HepG2 (cell line): ENCODE measurements at regions of chr11 and their contacts with region 1.

Region 1: GRCh38 chr11:2196970-2197770 is 25.6 kb upstream of the TH start:
- DNase-seq: peak; percentile 55
- ATAC-seq: peak; percentile 80
- H3K4me3 ChIP-seq: no peak overlapping the region
- H3K27ac ChIP-seq: no peak overlapping the region
- H3K4me1 ChIP-seq: peaks cover 48% of the 10 kb centered on the region
- H3K27me3 ChIP-seq: peaks cover 7 to 16% of the 10 kb centered on the region in 2 experiments; a peak in 4 of 5 replicates
- CTCF ChIP-seq: peak; percentile 100
- EP300 ChIP-seq: no peak
- POLR2A ChIP-seq: no peak
- RAD21 ChIP-seq: peak; percentile 96

Region 2: GRCh38 chr11:2208691-2209369 is 11.7 kb after region 1 on chr11:
- CTCF ChIA-PET with region 1: no interaction called
- POLR2A ChIA-PET with region 1: interaction called, 34 read pairs
- in situ Hi-C with region 1: no loop called
- intact Hi-C with region 1: no loop called
- DNase-seq: peak; percentile 12
- ATAC-seq: no peak
- H3K4me3 ChIP-seq: no peak overlapping the region
- H3K27ac ChIP-seq: peak overlapping the region; percentile 99
- H3K4me1 ChIP-seq: peaks cover 91% of the 10 kb centered on the region
- H3K27me3 ChIP-seq: no peaks in the 10 kb centered on the region; a peak in 1 of 5 replicates
- CTCF ChIP-seq: peak; percentile 22; the same call in 1 of the 2 replicates
- EP300 ChIP-seq: no peak
- POLR2A ChIP-seq: no peak
- RAD21 ChIP-seq: peak; percentile 72

Region 3: GRCh38 chr11:2215561-2216399 is 18.6 kb after region 1 on chr11:
- CTCF ChIA-PET with region 1: interaction called, 11 read pairs
- POLR2A ChIA-PET with region 1: interaction called, 34 read pairs
- in situ Hi-C with region 1: no loop called
- intact Hi-C with region 1: no loop called
- DNase-seq: peak; percentile 46
- ATAC-seq: 0 out of 3 replicates have a peak, but pooled peaks have one; percentile 9
- H3K4me3 ChIP-seq: no peak overlapping the region
- H3K27ac ChIP-seq: peak overlapping the region; percentile 99
- H3K4me1 ChIP-seq: peaks cover 81% of the 10 kb centered on the region
- H3K27me3 ChIP-seq: peaks cover 0 to 2% of the 10 kb centered on the region in 2 experiments; a peak in 3 of 5 replicates
- CTCF ChIP-seq: peak; percentile 77
- EP300 ChIP-seq: no peak
- POLR2A ChIP-seq: no peak
- RAD21 ChIP-seq: peak; percentile 63

Region 4: GRCh38 chr11:2298795-2299761 is 101.9 kb after region 1 on chr11:
- CTCF ChIA-PET with region 1: interaction called, 72 read pairs
- POLR2A ChIA-PET with region 1: interaction called, 4 read pairs
- in situ Hi-C with region 1: loop called (anchors 5 kb)
- intact Hi-C with region 1: loop called (anchors 1 kb)
- DNase-seq: peak; percentile 63
- ATAC-seq: peak; percentile 82
- H3K4me3 ChIP-seq: no peak overlapping the region
- H3K27ac ChIP-seq: no peak overlapping the region
- H3K4me1 ChIP-seq: peaks cover 31% of the 10 kb centered on the region
- H3K27me3 ChIP-seq: peaks cover 2 to 21% of the 10 kb centered on the region in 2 experiments; a peak in 2 of 5 replicates
- CTCF ChIP-seq: peak; percentile 96
- EP300 ChIP-seq: no peak
- POLR2A ChIP-seq: no peak
- RAD21 ChIP-seq: peak; percentile 96

Region 5: GRCh38 chr11:2526808-2527381 is 329.7 kb after region 1 on chr11:
- CTCF ChIA-PET with region 1: no interaction called
- POLR2A ChIA-PET with region 1: no interaction called
- in situ Hi-C with region 1: loop called (anchors 10 kb)
- intact Hi-C with region 1: no loop called
- DNase-seq: no peak
- ATAC-seq: peak; percentile 52
- H3K4me3 ChIP-seq: peak overlapping the region in 2 of 3 experiments; percentile 29 to 48; a peak in 3 of 6 replicates
- H3K27ac ChIP-seq: no peak overlapping the region
- H3K4me1 ChIP-seq: peaks cover 10% of the 10 kb centered on the region; the same call in 1 of the 2 replicates
- H3K27me3 ChIP-seq: peaks cover 20 to 81% of the 10 kb centered on the region in 2 experiments
- CTCF ChIP-seq: peak; percentile 35; the same call in 1 of the 2 replicates
- EP300 ChIP-seq: no peak
- POLR2A ChIP-seq: no peak
- RAD21 ChIP-seq: no peak